HEK293T (cell line): ENCODE measurements at regions of chr15 and their contacts with region 1.

Region 1: GRCh38 chr15:55526559-55527036 is 18.6 kb upstream of the DNAAF4 start:
- DNase-seq: peak; percentile 50

Region 2: GRCh38 chr15:55586808-55587207 is 60.2 kb after region 1 on chr15:
- CTCF ChIA-PET with region 1: interaction called, 10 read pairs
- POLR2A ChIA-PET with region 1: no interaction called
- DNase-seq: no peak